Caco-2 (cell line): ENCODE measurements at regions of chr5 and their contacts with region 1.

Region 1: DNA sequence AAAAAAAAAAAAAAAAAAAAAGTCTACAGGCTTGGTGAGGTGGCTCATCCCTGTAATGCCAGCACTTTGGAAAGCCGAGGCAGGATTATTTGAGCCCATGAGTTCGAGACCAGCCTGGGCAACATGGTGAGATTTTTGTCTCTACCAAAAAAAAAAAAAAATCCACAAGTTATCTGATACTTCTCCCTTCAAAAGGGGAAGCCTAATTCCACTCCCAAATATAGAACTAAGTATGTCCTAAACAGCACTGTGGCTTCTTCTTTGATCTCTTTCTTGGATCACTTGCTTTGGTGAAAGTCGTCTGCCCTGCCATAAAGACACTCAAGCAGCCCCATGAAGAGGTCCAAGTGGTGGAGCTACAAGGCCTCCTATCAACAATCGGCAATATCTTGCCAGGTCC is 18.8 kb upstream of the STING1 start:
- DNase-seq: no peak
- H3K4me3 ChIP-seq: no peak overlapping the region
- H3K4me3 Mint-ChIP-seq: no peak overlapping the region
- H3K27ac Mint-ChIP-seq: no peak overlapping the region
- H3K4me1 ChIP-seq: no peaks in the 10 kb centered on the region
- H3K4me1 Mint-ChIP-seq: no peaks in the 10 kb centered on the region
- H3K27me3 ChIP-seq: no peaks in the 10 kb centered on the region
- H3K27me3 Mint-ChIP-seq: no peaks in the 10 kb centered on the region
- CTCF ChIP-seq: no peak

Region 2: DNA sequence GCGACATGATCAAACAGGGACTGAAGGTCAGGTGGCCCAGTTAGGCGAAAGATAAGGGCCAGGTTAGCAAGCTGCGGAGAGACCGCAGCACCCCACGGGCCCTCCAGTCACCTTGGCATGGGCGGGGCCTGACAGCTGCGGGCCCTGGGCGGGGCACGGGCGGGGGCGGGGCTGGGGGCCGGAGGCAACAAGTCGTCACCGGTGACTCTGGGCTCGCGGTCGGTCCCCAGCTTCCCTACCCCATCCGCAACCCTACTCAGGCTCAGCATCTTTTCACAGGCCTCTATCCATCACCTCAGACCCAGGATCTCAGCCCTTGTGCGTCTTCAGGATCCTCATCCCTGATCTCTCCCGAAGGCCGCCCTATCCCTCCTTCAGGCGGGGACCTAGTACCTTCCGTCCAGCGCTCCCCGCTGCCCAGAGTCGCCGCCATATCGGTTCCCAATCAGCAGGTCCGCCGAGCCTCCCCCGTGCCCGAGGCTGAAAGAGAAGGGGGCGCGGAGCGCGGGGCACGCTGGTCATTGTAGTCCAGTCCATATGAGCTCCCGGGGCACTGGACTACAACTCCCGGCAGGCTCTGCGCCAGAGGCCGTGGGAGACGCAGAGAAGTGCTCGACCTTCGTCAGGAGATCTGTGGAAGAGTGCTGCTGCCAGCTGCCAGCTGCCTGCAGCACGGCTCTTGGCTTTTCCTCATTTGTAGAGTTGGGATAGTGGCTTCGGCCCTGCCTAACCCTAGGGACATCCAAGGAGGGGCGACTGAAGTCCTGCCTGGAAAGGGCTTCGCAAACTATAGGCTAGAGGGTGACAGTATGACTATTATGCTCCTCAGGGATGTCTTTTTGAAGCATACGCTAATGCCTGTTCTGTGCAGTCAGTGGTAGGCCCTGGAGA is 62.1 kb before region 1 on chr5 and contains the start of gene DNAJC18:
- CTCF ChIA-PET with region 1: no interaction called
- POLR2A ChIA-PET with region 1: no interaction called
- intact Hi-C with region 1: no loop called
- DNase-seq: peak; percentile 94
- H3K4me3 ChIP-seq: peak within 1 kb of the TSS; percentile 94
- H3K4me3 Mint-ChIP-seq: peak within 1 kb of the TSS; percentile 99
- H3K27ac Mint-ChIP-seq: peak within 1 kb of the TSS; percentile 96
- H3K4me1 ChIP-seq: peaks cover 22% of the 10 kb centered on the region
- H3K4me1 Mint-ChIP-seq: peaks cover 21% of the 10 kb centered on the region
- H3K27me3 ChIP-seq: no peaks in the 10 kb centered on the region
- H3K27me3 Mint-ChIP-seq: no peaks in the 10 kb centered on the region
- CTCF ChIP-seq: no peak
- total RNA-seq, gene DNAJC18: 12.5 and 14.1 TPM in 2 replicates

Region 3: GRCh38 chr5:139512786-139513390 is 11.5 kb after region 1 on chr5:
- CTCF ChIA-PET with region 1: interaction called, 11 read pairs
- POLR2A ChIA-PET with region 1: interaction called, 5 read pairs
- intact Hi-C with region 1: no loop called
- DNase-seq: no peak
- H3K4me3 ChIP-seq: no peak overlapping the region
- H3K4me3 Mint-ChIP-seq: no peak overlapping the region
- H3K27ac Mint-ChIP-seq: peak overlapping the region; percentile 51
- H3K4me1 ChIP-seq: peaks cover 11% of the 10 kb centered on the region
- H3K4me1 Mint-ChIP-seq: peaks cover 7% of the 10 kb centered on the region
- H3K27me3 ChIP-seq: no peaks in the 10 kb centered on the region
- H3K27me3 Mint-ChIP-seq: no peaks in the 10 kb centered on the region
- CTCF ChIP-seq: no peak